HEK293T (cell line): ENCODE measurements at regions of chr16 and their contacts with region 1.

Region 1: DNA sequence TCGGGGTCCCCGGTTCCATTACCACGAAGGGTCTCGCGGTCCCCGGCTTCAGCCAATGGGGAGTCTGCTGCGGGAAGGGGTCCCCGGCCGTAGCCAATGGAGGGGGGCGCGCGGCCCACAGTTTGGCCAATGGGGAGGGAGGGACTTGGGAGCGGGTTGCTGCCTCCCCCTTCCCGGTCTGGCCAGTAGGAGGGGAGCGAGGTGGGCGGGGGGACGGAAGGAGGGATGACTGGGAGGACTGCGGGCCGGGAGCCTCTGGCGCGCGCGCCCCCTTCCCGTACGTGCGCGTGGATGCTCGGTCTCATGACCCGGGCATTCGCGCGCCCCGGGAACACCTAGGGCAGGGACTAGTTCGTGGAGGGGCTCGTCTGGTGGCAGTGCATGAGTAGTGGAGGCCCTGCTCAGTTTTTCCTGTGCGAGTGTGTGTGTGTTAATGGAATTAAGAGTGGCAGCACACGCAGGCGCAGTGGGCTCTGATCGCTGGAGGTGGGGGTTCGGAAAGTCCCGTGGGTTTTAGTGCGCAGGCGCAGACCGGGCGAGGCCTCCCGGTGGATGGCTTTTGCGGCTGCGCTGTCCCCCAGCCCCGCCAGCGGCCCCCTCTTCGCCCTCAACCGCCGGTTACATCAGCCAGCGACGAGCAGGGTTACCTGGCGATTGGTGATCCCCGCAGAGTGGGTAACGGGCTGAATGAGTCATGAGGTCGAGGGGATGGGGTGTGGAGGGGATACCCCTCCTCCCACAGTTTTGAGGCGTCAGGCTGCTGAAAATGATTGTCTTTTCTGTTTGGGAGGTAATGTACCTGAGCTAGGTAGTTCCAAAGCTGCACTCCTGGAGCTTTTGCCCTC is 1.3 kb downstream of the ATXN2L start:
- DNase-seq: peak; percentile 93

Region 2: GRCh38 chr16:28835867-28836744 is 12.0 kb after region 1 on chr16:
- CTCF ChIA-PET with region 1: no interaction called
- POLR2A ChIA-PET with region 1: interaction called, 26 read pairs
- DNase-seq: no peak

Region 3: DNA sequence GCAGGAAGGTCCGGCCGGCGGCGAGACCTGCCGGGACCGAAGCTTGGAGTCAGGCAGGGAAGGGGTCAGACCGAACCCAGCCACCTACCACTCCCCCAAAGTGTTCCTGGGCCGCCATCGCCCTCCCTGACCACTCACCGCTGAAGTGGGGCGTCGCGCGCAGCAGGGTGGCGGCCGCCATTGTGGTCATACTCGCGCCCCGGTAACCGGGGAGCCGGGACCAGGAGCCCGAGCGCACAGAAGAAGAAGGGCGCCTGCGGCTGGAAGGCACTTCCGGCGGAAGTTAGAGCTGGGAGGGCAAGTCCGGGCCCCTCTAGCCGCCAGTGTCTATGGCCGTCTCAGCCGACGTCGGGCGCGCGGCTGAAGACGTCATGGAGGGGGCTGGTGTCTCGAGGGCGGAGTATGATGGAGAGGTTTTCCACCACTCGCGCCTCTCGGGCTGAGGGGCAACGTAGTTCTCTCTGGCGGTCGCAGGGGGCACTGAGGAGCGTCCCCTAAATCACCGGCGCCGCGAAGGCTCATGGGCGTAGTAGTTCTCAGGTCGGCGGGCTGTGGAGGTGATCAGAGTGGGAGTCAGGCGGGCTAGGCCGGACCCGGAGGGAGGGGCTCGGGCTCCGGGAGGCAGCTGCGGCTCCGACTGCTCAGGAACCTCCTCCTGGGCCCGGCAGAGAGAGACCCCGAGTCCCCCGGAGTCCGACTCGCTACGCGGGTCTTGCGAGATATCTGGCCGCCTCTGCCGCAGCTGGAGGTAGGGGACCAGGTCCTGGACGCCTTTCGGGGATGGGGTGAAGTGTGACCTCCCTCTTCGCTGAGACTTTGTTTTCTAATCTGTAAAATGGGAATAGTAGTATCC is 22.2 kb after region 1 on chr16 and contains the start of gene TUFM:
- CTCF ChIA-PET with region 1: no interaction called
- POLR2A ChIA-PET with region 1: interaction called, 54 read pairs
- DNase-seq: peak; percentile 96

Region 4: DNA sequence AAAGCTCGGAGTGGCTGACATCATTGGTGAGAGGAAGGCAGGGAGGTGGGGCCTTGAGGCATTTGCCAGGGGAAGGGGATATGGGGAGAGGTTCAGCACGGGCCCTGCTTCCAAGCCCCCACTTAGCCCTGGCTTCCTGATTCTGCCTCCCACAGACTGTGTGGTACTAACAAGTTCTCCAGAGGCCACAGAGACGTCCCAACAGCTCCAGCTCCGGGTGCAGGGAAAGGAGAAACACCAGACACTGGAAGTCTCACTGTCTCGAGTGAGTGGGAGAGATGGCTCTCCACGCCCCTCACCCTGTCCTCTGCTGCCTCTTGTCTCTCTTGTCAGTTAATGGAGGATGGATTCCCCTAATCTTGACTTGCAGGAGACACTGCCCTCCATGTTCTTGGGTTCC is 134.7 kb after region 1 on chr16:
- CTCF ChIA-PET with region 1: no interaction called
- POLR2A ChIA-PET with region 1: no interaction called
- DNase-seq: no peak